ENCODE measurements at regions of chr11 and their contacts with region 1.

Region 1: DNA sequence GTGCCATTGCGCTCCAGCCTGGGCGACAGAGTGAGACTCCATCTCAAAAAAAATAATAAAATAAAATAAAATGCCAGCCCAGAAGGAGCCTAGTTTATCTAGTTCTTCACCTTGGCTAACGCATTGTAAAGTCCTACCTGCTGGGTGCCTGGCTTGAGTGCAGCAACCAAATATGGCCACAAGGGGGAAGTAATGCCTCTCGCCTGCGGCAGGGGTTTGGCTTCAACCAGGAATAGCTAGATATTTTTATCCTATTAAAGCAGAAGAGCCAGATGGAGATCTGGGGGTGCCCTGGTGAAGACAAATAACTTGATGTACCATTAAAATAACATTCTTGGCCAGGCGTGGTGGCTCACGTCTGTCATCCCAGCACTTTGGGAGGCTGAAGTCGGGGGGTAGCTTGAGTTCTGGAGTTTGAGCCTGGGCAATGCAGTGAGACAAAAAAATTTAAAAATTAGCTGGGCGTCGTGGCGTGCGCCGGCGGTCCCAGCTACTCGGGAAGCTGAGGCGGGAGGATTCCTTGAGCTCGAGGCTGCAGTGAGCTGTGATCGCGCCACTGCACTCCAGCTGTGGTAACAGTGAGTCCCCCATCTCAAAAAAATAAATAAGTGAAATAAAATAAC is 20.6 kb upstream of the PLEKHB1 start:
- DNase-seq: peak; percentile 86 to 92
- H3K4me3 ChIP-seq: no peak overlapping the region
- H3K4me3 Mint-ChIP-seq: peak overlapping the region; percentile 66
- H3K27ac Mint-ChIP-seq: peak overlapping the region; percentile 53
- H3K4me1 ChIP-seq: peaks cover 21% of the 10 kb centered on the region
- H3K4me1 Mint-ChIP-seq: peaks cover 24% of the 10 kb centered on the region
- H3K27me3 ChIP-seq: no peaks in the 10 kb centered on the region
- H3K27me3 Mint-ChIP-seq: peaks cover 5% of the 10 kb centered on the region
- CTCF ChIP-seq: peak; percentile 98 to 99

Region 2: GRCh38 chr11:72781313-72782050 is 844.3 kb before region 1 on chr11:
- CTCF ChIA-PET with region 1: no interaction called
- POLR2A ChIA-PET with region 1: no interaction called
- intact Hi-C with region 1: no loop called
- DNase-seq: peak; percentile 80
- H3K4me3 ChIP-seq: peak overlapping the region; percentile 88
- H3K4me3 Mint-ChIP-seq: peak overlapping the region; percentile 74
- H3K27ac Mint-ChIP-seq: peak overlapping the region; percentile 99
- H3K4me1 ChIP-seq: peaks cover 85% of the 10 kb centered on the region
- H3K4me1 Mint-ChIP-seq: peaks cover 64% of the 10 kb centered on the region
- H3K27me3 ChIP-seq: no peaks in the 10 kb centered on the region
- H3K27me3 Mint-ChIP-seq: no peaks in the 10 kb centered on the region
- CTCF ChIP-seq: peak in 1 of 2 experiments; percentile 23

Region 3: GRCh38 chr11:73521621-73522020 is 104.2 kb before region 1 on chr11:
- CTCF ChIA-PET with region 1: no interaction called
- POLR2A ChIA-PET with region 1: interaction called, 11 read pairs
- intact Hi-C with region 1: no loop called
- DNase-seq: no peak
- H3K4me3 ChIP-seq: no peak overlapping the region
- H3K4me3 Mint-ChIP-seq: no peak overlapping the region
- H3K27ac Mint-ChIP-seq: no peak overlapping the region
- H3K4me1 ChIP-seq: 0 out of 2 replicates have a peak, but pooled peaks cover 5% of the 10 kb centered on the region
- H3K4me1 Mint-ChIP-seq: peaks cover 8% of the 10 kb centered on the region
- H3K27me3 ChIP-seq: no peaks in the 10 kb centered on the region
- H3K27me3 Mint-ChIP-seq: no peaks in the 10 kb centered on the region
- CTCF ChIP-seq: no peak

Region 4: GRCh38 chr11:73653996-73654395 is 28.2 kb after region 1 on chr11:
- CTCF ChIA-PET with region 1: interaction called, 48 read pairs
- POLR2A ChIA-PET with region 1: no interaction called
- intact Hi-C with region 1: no loop called
- DNase-seq: no peak
- H3K4me3 ChIP-seq: no peak overlapping the region
- H3K4me3 Mint-ChIP-seq: no peak overlapping the region
- H3K27ac Mint-ChIP-seq: no peak overlapping the region
- H3K4me1 ChIP-seq: peaks cover 11% of the 10 kb centered on the region; the same call in 1 of the 2 replicates
- H3K4me1 Mint-ChIP-seq: peaks cover 10% of the 10 kb centered on the region
- H3K27me3 ChIP-seq: no peaks in the 10 kb centered on the region
- H3K27me3 Mint-ChIP-seq: no peaks in the 10 kb centered on the region
- CTCF ChIP-seq: no peak

Region 5: DNA sequence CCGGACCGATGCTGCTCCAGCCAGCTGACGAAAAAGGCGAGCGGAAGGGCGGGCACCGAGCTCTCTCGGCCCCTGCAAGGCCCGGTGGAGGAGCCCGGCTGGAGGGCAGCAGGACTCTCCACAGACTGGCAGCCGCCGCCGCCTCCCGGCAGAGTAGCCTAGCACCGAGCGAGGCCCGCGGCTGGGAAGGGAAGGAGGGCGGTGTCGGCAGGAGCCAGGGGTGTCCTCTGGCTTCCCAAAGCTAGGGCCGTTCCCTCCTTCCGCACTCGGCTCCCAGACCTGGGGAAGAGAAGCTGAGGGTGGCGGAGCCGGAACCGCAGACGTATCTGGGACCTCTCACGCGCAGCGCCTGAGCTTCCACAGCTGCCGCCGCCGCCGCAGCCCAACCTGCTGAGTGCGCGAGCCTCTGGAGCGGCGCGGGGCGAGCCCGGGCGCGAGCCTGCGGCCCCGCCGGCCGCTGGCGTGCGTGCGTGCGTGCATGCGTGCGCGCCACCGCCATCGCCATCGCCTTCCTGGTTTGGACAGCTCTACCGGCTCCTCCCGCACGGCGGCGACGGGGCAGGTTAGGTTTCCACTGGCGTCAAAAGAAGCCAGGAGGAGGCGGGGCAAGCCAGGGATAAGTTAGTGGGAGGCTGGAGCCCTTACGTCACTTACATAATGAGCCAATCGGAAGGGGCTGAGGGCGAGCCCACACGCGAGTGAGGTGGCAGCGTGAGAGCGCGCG is 135.0 kb after region 1 on chr11 and contains the start of gene RAB6A:
- CTCF ChIA-PET with region 1: interaction called, 13 read pairs
- POLR2A ChIA-PET with region 1: interaction called, 4 read pairs
- intact Hi-C with region 1: loop called (anchors 1 kb)
- DNase-seq: peak; percentile 100
- H3K4me3 ChIP-seq: peak within 1 kb of the TSS; percentile 92
- H3K4me3 Mint-ChIP-seq: peak within 1 kb of the TSS; percentile 91
- H3K27ac Mint-ChIP-seq: peak within 1 kb of the TSS; percentile 82
- H3K4me1 ChIP-seq: peaks cover 28% of the 10 kb centered on the region
- H3K4me1 Mint-ChIP-seq: peaks cover 21% of the 10 kb centered on the region
- H3K27me3 ChIP-seq: no peaks in the 10 kb centered on the region
- H3K27me3 Mint-ChIP-seq: no peaks in the 10 kb centered on the region
- CTCF ChIP-seq: peak; percentile 51 to 63
- total RNA-seq, gene RAB6A: 210 and 227 TPM in 2 replicates

Region 6: DNA sequence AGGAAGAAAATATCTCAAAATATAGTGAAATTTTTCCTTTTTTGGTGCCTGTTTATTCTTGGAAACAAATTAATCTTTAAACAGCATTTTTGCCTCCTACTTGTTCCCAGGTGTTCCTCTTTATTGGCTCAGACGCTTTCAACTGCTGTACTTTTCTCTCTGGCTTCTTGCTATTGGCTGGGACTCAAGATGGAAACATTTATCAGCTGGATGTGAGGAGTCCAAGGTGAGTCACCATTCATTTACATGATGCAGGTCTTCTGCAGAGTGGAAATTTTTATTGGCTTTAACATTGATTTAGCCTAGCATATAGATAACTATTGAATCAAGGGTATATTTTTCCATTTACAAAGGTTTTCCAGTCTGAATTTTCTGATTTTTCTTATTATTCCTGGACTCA is 290.6 kb after region 1 on chr11:
- CTCF ChIA-PET with region 1: no interaction called
- POLR2A ChIA-PET with region 1: interaction called, 11 read pairs
- intact Hi-C with region 1: no loop called
- DNase-seq: no peak
- H3K4me3 ChIP-seq: no peak overlapping the region
- H3K4me3 Mint-ChIP-seq: no peak overlapping the region
- H3K27ac Mint-ChIP-seq: no peak overlapping the region
- H3K4me1 ChIP-seq: no peaks in the 10 kb centered on the region
- H3K4me1 Mint-ChIP-seq: peaks cover 6% of the 10 kb centered on the region
- H3K27me3 ChIP-seq: no peaks in the 10 kb centered on the region
- H3K27me3 Mint-ChIP-seq: no peaks in the 10 kb centered on the region
- CTCF ChIP-seq: no peak

Measured in Caco-2 (cell line).